ENCODE measurements at regions of chr5 and their contacts with region 1.

Region 1: DNA sequence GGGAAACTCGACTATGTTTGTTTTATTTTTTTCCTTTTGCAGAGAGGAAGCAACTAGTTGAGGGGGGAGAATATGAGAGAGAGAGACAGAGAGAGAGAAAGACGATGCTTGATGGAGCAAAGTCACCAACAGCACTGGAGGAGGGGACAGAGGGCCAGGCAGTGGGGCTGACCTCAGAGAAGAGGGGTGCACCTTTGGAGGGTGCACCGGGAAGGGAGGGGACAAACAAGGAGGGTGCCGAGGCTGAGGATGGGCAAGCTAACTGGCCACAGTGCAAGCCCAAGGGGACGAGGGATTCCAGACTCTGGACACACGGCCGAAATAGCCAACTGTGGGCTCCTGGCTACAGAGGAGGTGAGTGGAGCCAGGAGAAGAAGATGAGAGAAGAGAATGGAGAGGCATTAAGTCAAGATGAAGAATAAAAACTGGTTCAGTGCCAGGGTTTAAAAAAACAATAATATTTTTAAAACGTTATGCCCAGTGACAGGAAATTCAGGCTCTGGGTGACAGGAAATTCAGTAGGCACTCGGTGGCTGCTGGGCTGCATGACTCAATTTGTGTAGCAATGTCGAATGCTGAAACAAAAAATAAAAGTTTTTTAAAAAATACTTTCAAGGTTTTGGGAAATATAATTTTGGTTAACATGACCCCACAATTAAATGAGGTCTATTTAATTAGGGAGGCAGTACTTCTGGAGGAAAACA is 13.3 kb upstream of the GLRX start:
- DNase-seq: no peak
- H3K4me3 ChIP-seq: no peak overlapping the region
- H3K4me3 Mint-ChIP-seq: peak overlapping the region; percentile 77
- H3K27ac Mint-ChIP-seq: peak overlapping the region; percentile 87
- H3K4me1 ChIP-seq: no peaks in the 10 kb centered on the region
- H3K4me1 Mint-ChIP-seq: peaks cover 25% of the 10 kb centered on the region
- H3K27me3 ChIP-seq: no peaks in the 10 kb centered on the region
- H3K27me3 Mint-ChIP-seq: no peaks in the 10 kb centered on the region
- CTCF ChIP-seq: no peak

Region 2: GRCh38 chr5:95794070-95794516 is 41.7 kb before region 1 on chr5:
- CTCF ChIA-PET with region 1: no interaction called
- POLR2A ChIA-PET with region 1: no interaction called
- intact Hi-C with region 1: loop called (anchors 2 kb)
- DNase-seq: no peak
- H3K4me3 ChIP-seq: no peak overlapping the region
- H3K4me3 Mint-ChIP-seq: no peak overlapping the region
- H3K27ac Mint-ChIP-seq: no peak overlapping the region
- H3K4me1 ChIP-seq: peaks cover 21% of the 10 kb centered on the region
- H3K4me1 Mint-ChIP-seq: peaks cover 30% of the 10 kb centered on the region
- H3K27me3 ChIP-seq: no peaks in the 10 kb centered on the region
- H3K27me3 Mint-ChIP-seq: no peaks in the 10 kb centered on the region
- CTCF ChIP-seq: no peak

Region 3: DNA sequence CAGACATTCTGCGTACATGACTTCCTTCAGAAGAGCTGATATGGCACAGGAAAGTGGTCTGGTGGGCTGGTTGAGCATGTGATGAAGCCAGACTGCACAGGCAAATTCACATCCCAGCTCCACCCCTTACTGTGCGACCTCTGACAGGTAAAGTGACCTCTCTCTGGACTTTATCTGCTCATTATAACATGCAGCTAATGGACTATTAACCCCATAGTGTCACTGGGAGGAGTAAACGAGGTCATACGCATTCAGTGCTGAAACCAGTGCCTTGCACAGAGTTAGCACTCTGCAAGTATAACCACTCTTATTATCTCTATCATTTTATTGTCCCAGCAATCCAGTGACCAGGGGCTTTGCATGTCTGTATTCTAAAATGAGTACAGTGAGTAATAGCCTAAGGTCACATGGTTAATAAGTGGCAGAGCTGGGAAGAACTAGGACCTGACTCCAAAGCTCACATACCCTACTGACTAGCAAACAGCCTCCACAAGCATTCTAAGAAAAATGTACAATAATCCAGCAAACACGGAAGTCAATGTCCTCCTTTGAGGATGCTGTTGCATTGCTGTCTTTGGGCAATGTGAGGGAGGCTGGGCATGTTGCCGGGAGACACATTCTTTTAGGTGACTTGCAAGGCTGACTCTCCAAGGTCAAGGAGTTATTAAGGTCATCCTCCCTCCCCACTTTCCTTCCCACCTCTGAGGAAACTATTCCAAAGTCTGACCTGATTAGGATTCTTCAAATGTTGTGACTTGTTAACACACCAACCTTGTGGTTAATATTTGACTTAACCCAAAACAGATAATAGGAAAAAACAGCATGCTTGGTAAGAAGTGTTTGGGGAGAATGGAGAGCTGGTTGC is 32.3 kb before region 1 on chr5:
- CTCF ChIA-PET with region 1: no interaction called
- POLR2A ChIA-PET with region 1: no interaction called
- intact Hi-C with region 1: loop called (anchors 2 kb)
- DNase-seq: peak; percentile 72 to 86
- H3K4me3 ChIP-seq: no peak overlapping the region
- H3K4me3 Mint-ChIP-seq: peak overlapping the region; percentile 18
- H3K27ac Mint-ChIP-seq: peak overlapping the region; percentile 42
- H3K4me1 ChIP-seq: peaks cover 33% of the 10 kb centered on the region
- H3K4me1 Mint-ChIP-seq: peaks cover 20% of the 10 kb centered on the region
- H3K27me3 ChIP-seq: no peaks in the 10 kb centered on the region
- H3K27me3 Mint-ChIP-seq: no peaks in the 10 kb centered on the region
- CTCF ChIP-seq: no peak

Region 4: GRCh38 chr5:95846554-95847260 is 10.9 kb after region 1 on chr5:
- CTCF ChIA-PET with region 1: interaction called, 4 read pairs
- POLR2A ChIA-PET with region 1: no interaction called
- intact Hi-C with region 1: loop called (anchors 1 kb)
- DNase-seq: peak; percentile 66 to 78
- H3K4me3 ChIP-seq: no peak overlapping the region
- H3K4me3 Mint-ChIP-seq: no peak overlapping the region
- H3K27ac Mint-ChIP-seq: no peak overlapping the region
- H3K4me1 ChIP-seq: no peaks in the 10 kb centered on the region
- H3K4me1 Mint-ChIP-seq: no peaks in the 10 kb centered on the region
- H3K27me3 ChIP-seq: no peaks in the 10 kb centered on the region
- H3K27me3 Mint-ChIP-seq: no peaks in the 10 kb centered on the region
- CTCF ChIP-seq: peak; percentile 91 to 92

Measured in Caco-2 (cell line).